T-cell (primary cell): ENCODE measurements at regions of chr10 and their contacts with region 1.

Region 1: DNA sequence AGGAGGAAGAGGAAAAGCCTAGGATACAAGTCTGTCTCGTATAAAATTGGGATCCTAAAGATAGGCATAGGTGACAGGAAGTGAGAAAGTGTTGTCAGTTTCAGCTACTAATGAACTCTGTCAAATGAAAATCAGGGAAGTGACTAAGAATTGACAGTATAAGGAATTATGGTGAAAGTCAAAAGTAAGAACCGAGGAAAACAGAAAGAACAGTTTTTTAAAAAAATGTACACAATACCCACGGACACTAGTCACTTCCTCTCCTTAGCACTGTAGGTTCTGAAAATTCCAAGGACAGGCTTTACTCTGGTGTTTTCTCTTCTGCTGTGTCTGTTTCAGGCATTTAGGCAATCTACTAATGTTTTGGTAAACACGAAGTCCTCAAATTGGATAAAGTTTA is 42.3 kb downstream of the ATAD1 start:
- DNase-seq: no peak
- ATAC-seq: no peak
- H3K4me3 ChIP-seq: no peak overlapping the region
- H3K4me3 Mint-ChIP-seq: no peak overlapping the region
- H3K27ac ChIP-seq: no peak overlapping the region
- H3K27ac Mint-ChIP-seq: peak overlapping the region; percentile 21 to 81
- H3K4me1 ChIP-seq: no peaks in the 10 kb centered on the region
- H3K4me1 Mint-ChIP-seq: peaks cover 0 to 3% (median 2%) of the 10 kb centered on the region in 3 donors
- H3K27me3 ChIP-seq: no peaks in the 10 kb centered on the region
- H3K27me3 Mint-ChIP-seq: no peaks in the 10 kb centered on the region

Region 2: DNA sequence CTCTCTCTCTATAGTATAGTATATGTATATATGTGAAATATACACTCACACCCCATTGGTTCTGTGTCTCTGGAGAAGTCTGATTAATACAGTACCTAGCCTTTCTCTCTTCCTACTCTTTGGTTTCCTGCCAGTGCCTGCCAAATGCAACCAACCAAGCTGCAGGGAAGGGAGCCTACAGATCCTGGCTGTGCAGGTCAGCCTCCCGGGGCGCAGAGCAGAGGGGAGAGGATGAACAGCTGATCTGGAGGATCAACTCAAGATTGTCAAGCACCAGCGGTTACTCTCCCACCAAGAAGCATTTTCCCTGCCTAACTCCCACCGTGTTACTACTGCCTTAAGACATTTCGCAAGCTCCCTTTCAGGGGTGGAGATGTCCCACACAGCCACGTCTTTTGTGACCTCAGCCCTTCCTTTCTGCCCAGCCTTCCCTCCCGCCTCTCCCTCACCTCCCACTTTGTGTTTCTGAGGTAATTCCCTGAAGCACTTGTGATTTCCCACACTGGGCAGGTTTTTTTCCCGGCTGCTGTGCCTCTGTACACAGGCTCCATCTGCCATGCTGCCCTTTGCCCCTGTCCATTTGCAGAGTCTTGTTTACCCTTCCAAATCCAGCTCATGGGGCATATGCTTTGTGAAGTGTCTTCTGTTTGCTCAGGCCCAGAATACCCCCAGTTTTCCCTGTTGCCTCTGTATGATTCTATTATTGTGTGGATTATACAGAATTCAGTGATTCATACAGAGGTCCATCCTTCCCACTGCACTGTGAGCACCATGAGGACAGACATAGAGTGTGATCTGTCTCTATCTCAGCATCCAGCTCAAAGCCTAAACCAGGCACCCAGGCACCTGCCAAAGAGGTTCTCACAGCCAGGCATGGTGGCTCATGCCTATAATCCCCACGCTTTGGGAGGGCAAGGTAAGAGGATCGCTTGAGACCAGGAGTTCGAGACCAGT is 157.0 kb before region 1 on chr10:
- CTCF ChIA-PET with region 1: no interaction called
- POLR2A ChIA-PET with region 1: no interaction called
- DNase-seq: no peak
- ATAC-seq: no peak
- H3K4me3 ChIP-seq: no peak overlapping the region
- H3K4me3 Mint-ChIP-seq: no peak overlapping the region
- H3K27ac ChIP-seq: no peak overlapping the region
- H3K27ac Mint-ChIP-seq: no peak overlapping the region
- H3K4me1 ChIP-seq: no peaks in the 10 kb centered on the region
- H3K4me1 Mint-ChIP-seq: no peaks in the 10 kb centered on the region
- H3K27me3 ChIP-seq: peaks cover 0 to 5% of the 10 kb centered on the region in 2 experiments
- H3K27me3 Mint-ChIP-seq: peaks cover 15 to 31% of the 10 kb centered on the region in 2 donors

Region 3: DNA sequence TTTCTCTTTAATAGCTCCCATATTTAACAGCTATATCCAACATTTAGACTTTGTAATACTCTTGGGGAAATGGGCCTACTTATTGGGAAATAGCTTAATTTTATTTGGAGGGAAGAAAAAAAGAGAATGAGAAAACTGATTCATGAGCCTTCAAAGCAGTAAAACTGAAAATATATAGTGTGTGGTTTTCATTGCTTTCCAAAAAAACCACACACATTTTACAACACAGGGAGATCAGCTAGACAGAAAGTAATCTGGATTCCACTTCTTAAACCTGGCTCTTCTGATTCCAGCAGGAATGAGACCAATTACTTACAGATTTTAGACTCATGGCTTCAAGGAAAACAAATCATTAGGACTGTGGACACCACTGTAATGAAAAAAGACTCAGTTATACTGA is 1382.7 kb after region 1 on chr10:
- CTCF ChIA-PET with region 1: no interaction called
- POLR2A ChIA-PET with region 1: interaction called in 1 of 2 experiments, 15 read pairs
- DNase-seq: no peak
- ATAC-seq: no peak
- H3K4me3 ChIP-seq: no peak overlapping the region
- H3K4me3 Mint-ChIP-seq: no peak overlapping the region
- H3K27ac ChIP-seq: no peak overlapping the region
- H3K27ac Mint-ChIP-seq: no peak overlapping the region
- H3K4me1 ChIP-seq: no peaks in the 10 kb centered on the region
- H3K4me1 Mint-ChIP-seq: peaks cover 4 to 5% (median 4%) of the 10 kb centered on the region in 3 donors
- H3K27me3 ChIP-seq: no peaks in the 10 kb centered on the region
- H3K27me3 Mint-ChIP-seq: peaks cover 13 to 16% of the 10 kb centered on the region in 2 donors

Region 4: DNA sequence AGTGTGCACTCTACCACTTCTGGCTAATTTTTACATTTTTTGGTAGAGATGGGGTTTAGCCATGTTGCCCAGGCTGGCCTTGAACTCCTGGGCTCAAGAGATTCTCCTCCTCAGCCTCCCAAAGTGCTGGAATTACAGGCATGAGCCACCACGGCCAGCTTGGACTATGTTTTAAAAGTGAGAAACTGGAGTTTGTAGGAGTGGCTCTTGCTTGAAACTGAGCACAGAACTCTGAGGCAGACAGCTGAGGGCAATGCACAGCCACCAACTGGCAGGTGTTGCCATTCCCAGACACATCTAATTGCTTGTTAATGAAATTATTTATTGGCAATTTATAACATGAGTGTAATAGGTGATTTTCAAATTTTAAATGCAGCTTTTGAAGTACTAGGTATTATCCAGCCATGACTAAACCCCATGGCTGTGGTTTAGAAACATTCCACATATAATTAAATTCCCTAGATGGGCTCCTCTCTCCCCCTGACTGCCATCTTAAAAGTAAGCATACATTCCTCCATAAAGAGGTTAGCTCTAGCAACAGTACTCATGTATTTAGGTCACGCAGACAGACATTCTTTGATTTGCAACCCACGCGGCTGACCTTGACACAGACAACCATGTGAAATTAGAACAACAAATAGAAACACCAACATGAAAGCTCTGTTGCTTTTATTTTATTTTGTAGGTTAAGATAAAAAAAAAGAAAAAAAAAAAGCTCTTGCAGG is 1849.4 kb after region 1 on chr10:
- CTCF ChIA-PET with region 1: no interaction called
- POLR2A ChIA-PET with region 1: no interaction called
- DNase-seq: no peak
- ATAC-seq: no peak
- H3K4me3 ChIP-seq: no peak overlapping the region
- H3K4me3 Mint-ChIP-seq: no peak overlapping the region
- H3K27ac ChIP-seq: no peak overlapping the region
- H3K27ac Mint-ChIP-seq: no peak overlapping the region
- H3K4me1 ChIP-seq: no peaks in the 10 kb centered on the region
- H3K4me1 Mint-ChIP-seq: no peaks in the 10 kb centered on the region
- H3K27me3 ChIP-seq: no peaks in the 10 kb centered on the region
- H3K27me3 Mint-ChIP-seq: no peaks in the 10 kb centered on the region